ENCODE measurements at regions of chr6 and their contacts with region 1.

Region 1: GRCh38 chr6:44221291-44221960 is 2.0 kb upstream of the SLC29A1 start:
- DNase-seq: peak; percentile 96 to 97
- H3K4me3 ChIP-seq: peak overlapping the region; percentile 71 to 94
- H3K27ac ChIP-seq: peak overlapping the region; percentile 95 to 99
- H3K4me1 ChIP-seq: peaks cover 44 to 69% of the 10 kb centered on the region in 2 donors
- H3K27me3 ChIP-seq: no peaks in the 10 kb centered on the region
- CTCF ChIP-seq: peak; percentile 84 to 91 (median 86)

Region 2: DNA sequence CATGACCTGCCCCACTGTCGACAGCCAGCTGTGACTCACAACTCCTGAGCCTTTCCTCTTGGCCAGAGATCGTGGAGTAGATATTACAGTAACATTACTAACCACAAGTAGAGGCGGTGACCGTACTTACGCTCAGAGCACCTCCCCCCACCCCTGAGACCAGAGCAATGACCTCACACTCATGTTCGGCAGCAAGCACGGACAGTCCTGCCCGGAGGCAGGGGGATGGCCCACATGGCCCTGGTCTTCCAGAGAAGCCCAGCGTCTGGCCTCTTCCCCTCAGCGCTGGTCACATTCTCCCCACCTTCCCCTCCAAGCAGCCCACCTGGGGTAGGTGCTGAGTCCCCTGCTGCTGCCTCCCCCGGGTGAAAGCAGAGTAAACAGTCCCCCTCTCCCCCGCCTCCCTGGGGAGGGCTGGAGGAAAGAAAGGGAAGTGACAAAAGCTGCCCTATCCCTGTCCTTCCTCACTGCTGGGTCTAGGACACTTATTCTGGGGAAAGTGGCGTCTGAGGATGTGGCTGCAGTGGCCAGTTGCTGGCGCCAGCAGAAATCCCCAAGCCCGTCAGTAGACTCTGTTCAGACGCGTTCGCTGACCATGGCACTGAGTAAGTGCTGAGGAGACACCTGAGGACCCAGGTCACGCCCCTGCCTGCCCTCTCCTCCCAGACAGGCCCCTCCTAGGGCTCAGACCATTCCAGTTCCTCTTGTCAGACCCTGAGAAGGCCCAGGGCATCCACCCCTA is 162.6 kb before region 1 on chr6:
- intact Hi-C with region 1: no loop called
- DNase-seq: peak; percentile 90 to 96
- H3K4me3 ChIP-seq: peak overlapping the region in 1 of 2 donors; percentile 14
- H3K27ac ChIP-seq: peak overlapping the region; percentile 86 to 91
- H3K4me1 ChIP-seq: peaks cover 29 to 42% of the 10 kb centered on the region in 2 donors
- H3K27me3 ChIP-seq: no peaks in the 10 kb centered on the region
- CTCF ChIP-seq: no peak

Region 3: GRCh38 chr6:44127186-44128019 is 94.0 kb before region 1 on chr6 and contains the starts of genes MRPL14 and TMEM63B:
- intact Hi-C with region 1: loop called (anchors 5 kb)
- DNase-seq: peak; percentile 43 to 91
- H3K4me3 ChIP-seq: peak within 1 kb of the TSS; percentile 85 to 86
- H3K27ac ChIP-seq: peak within 1 kb of the TSS; percentile 81 to 84
- H3K4me1 ChIP-seq: peaks cover 0 to 23% of the 10 kb centered on the region in 2 donors
- H3K27me3 ChIP-seq: no peaks in the 10 kb centered on the region
- CTCF ChIP-seq: no peak
- total RNA-seq, gene MRPL14: 61.8 TPM
- total RNA-seq, gene TMEM63B: 9.6 TPM

Region 4: DNA sequence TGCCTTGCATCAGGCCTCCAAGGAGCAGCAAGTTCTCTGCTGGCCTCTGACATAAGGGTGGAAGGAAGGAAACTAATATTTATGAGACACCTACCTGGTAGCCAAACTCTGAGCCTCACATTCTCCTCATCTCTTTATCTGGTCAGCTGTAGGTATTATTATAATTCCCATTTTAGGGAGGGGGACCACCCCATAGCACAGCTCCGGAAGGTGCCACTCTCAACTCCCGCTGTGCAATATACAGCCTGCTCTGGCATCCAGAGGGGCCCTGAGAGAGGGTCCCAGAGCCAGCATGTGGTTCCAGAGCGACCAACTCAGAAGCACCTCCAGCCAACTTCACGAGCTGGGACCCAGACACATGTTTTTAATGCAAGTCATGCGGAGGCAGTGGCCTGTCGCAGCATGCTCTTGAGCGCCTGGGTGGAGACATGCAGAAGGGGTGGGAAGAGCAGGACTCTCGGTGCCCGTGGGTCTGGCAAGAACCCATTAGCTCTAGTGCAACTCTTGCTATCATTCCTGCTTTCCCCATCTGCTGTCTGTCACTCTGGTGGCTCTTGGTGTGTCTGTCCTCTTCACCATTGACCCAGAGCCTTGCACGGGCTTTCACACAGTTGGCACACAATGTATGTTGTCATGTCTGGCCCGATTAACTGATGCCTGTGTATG is 19.7 kb before region 1 on chr6:
- intact Hi-C with region 1: loop called (anchors 2 kb)
- DNase-seq: no peak
- H3K4me3 ChIP-seq: no peak overlapping the region
- H3K27ac ChIP-seq: no peak overlapping the region
- H3K4me1 ChIP-seq: peaks cover 0 to 10% of the 10 kb centered on the region in 2 donors
- H3K27me3 ChIP-seq: no peaks in the 10 kb centered on the region
- CTCF ChIP-seq: no peak

Region 5: DNA sequence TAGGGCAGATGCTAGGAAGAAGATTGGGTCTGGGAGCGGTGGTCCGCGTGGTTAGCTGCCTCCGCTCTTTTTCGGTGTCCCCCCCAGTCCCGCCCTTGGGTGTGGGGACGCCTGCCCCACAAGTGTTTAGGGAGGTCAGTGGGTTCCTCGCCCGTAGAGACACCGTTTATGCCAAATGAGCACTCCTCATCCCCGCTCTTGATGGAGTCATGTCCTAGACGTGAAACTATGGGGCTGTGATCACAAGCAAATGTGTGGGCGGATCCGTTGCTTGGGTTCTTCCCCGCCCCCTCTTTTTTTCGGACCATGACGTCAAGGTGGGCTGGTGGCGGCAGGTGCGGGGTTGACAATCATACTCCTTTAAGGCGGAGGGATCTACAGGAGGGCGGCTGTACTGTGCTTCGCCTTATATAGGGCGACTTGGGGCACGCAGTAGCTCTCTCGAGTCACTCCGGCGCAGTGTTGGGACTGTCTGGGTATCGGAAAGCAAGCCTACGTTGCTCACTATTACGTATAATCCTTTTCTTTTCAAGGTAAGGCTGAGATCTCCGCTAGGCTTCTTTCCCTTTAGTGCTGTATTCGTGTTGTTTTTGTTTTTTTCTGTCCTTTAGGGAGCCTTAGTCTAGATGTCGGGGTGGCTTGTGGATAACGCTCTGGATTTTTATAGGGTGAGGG is 25.4 kb after region 1 on chr6 and contains the start of gene HSP90AB1:
- intact Hi-C with region 1: loop called (anchors 1 kb)
- DNase-seq: peak; percentile 96 to 99
- H3K4me3 ChIP-seq: peak within 1 kb of the TSS; percentile 92 to 99
- H3K27ac ChIP-seq: peak within 1 kb of the TSS; percentile 99 to 100
- H3K4me1 ChIP-seq: peaks cover 0 to 30% of the 10 kb centered on the region in 2 donors
- H3K27me3 ChIP-seq: no peaks in the 10 kb centered on the region
- CTCF ChIP-seq: peak in 1 of 3 experiments; percentile 9
- total RNA-seq, gene HSP90AB1: 354 TPM

Region 6: DNA sequence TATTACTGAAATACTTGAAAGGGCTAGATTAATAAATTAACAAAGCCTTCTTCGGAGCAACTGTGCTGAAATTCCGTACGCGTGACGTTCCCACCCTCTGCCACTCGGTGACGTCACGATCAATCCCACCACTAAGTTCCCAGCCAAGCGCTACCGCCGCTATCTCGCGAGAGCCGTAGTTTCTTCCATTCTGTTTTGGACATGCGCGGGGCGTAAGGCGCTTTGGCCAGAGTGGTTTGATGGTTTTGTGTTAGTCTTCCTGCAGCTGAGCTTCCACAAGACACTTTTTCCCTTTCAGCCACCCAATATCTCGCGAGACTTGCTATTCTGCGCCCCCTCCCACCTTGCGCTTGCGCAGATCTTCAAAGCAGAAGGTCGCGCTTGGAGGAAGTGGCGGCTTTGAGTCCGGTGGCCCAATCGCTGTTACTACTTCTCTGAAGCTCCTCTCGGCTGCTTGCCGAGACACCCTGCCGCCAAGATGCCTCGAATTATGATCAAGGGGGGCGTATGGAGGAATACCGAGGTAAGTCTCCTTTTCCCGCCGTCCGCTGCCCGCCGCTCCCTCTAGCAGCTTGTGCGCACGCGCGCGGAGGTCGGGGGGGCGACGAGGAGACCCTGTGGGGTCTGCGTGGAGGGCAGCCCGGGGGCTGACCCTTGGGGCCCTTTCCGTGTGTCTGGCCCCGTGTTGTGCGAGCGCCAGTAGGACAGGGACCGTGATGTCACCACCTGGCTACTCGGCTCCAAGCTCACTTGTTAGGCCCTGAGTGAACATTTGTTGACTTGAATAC is 166.1 kb after region 1 on chr6 and contains the start of gene CDC5L:
- intact Hi-C with region 1: loop called (anchors 1 kb)
- DNase-seq: peak; percentile 91 to 99
- H3K4me3 ChIP-seq: peak within 1 kb of the TSS; percentile 70 to 94
- H3K27ac ChIP-seq: peak within 1 kb of the TSS; percentile 89 to 91
- H3K4me1 ChIP-seq: peaks cover 0 to 17% of the 10 kb centered on the region in 2 donors
- H3K27me3 ChIP-seq: no peaks in the 10 kb centered on the region
- CTCF ChIP-seq: no peak
- total RNA-seq, gene CDC5L: 10.9 TPM

Measured in ascending aorta (tissue), 2 donors.